ENCODE measurements at regions of chr4 and their contacts with region 1.

Region 1: DNA sequence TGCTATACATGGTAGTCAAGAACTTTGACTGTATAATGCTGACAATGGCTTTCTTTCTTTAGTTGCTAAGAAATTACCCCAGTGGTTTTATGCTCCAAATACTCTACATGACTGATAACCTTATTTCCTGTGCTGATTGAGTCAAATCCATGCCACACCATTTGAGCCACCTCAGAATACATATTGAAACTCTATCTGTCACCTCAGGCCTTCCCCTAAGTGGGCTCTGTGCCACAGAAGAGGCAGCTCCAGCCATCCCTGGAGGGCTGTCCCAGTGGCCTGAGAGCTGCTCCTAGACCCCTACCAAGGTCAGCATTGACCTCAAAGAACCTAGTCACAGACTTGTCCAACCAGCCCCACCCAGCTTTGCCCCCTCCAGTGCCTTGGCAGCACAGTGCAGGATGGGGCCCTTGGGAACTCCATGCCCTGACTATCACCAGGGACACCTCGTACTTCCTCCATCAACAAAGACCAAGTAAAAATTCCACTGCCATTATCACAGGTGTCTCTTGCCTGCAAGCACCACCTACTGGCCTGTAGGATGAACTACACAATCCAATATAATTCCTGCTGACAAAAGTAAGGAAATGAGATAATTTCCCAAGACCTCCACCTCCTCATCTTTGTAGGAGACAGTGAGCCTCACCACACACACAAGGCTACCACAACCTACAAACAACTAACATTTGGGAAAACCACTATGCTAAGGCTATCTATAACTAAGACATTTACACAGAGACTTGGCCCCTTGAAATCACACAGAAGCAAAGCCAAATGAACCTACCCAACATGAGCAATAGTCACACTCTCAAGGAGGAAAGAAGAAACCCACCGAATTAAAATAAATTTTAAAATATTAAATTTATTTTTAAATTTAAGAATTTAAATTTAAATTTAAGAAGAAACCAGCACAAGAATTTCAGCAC is 239.9 kb downstream of the NKX6-1 start:
- DNase-seq: peak; percentile 32
- ATAC-seq: no peak
- H3K4me3 ChIP-seq: no peak overlapping the region
- H3K27ac ChIP-seq: no peak overlapping the region
- H3K4me1 ChIP-seq: peaks cover 10% of the 10 kb centered on the region; the same call in 1 of the 2 replicates
- H3K27me3 ChIP-seq: no peaks in the 10 kb centered on the region
- CTCF ChIP-seq: peak; percentile 67

Region 2: DNA sequence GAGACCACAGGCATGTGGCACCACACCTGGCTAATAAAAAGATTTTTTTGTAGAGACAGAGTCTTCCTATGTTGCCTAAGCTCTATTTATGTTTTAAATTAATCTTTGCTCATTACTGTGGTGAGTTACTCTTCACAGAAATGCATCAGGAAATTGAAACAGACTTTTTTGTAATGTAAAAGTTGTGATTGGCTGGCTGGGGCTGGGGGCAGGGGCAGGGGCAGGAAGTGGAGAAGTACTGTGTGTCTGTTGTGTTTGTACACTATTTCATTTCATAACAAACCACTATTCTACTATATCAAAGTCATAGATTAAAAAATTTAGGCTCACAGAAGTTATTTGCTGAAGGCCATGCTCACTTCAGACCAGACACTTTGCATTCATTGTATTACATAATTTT is 755.2 kb before region 1 on chr4:
- CTCF ChIA-PET with region 1: no interaction called
- POLR2A ChIA-PET with region 1: no interaction called
- intact Hi-C with region 1: no loop called
- DNase-seq: no peak
- ATAC-seq: no peak
- H3K4me3 ChIP-seq: no peak overlapping the region
- H3K27ac ChIP-seq: no peak overlapping the region
- H3K4me1 ChIP-seq: no peaks in the 10 kb centered on the region
- H3K27me3 ChIP-seq: no peaks in the 10 kb centered on the region
- CTCF ChIP-seq: no peak

Region 3: DNA sequence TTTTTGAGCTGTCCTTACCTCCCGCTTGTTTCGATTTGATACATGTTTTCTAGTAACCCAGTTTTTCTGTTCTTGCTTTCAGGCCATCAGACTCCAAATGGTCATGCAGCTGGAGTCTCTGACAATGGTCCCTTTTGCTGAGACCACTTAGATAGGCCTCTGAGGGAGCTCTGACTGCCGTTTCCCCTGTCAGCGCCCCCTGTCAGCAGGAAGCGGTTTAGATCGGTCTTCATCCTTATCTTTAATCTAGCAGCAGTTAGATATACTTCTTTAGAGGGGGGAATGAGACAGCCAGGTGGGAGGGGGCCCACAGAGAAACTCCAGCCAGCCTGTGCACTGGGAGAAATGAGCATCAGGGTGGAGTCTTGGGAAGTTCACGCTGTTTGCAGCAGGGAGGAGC is 265.4 kb before region 1 on chr4:
- CTCF ChIA-PET with region 1: no interaction called
- POLR2A ChIA-PET with region 1: no interaction called
- intact Hi-C with region 1: no loop called
- DNase-seq: no peak
- ATAC-seq: no peak
- H3K4me3 ChIP-seq: no peak overlapping the region
- H3K27ac ChIP-seq: no peak overlapping the region
- H3K4me1 ChIP-seq: no peaks in the 10 kb centered on the region
- H3K27me3 ChIP-seq: no peaks in the 10 kb centered on the region
- CTCF ChIP-seq: peak; percentile 42

Region 4: DNA sequence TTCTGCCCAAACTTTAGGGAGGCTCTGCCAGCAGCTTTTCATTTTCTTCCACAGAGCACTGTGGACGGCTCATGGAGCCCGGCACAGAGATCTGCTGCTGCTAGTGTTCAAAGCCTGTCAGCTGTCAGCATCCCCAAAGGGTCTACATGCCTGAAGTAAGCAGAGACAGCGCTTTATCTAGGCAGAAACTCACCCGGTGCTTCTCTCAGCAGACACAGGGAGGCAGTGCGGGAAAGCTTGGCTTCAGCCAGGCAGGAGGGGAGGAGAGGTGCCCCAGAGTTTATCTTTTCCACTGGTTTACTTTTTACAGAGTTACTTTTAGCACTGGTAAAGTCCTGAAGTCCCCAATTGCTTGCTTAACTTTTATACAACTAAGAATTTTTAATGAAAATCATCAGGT is 99.4 kb before region 1 on chr4:
- CTCF ChIA-PET with region 1: no interaction called
- POLR2A ChIA-PET with region 1: no interaction called
- intact Hi-C with region 1: loop called (anchors 10 kb)
- DNase-seq: peak; percentile 45
- ATAC-seq: no peak
- H3K4me3 ChIP-seq: no peak overlapping the region
- H3K27ac ChIP-seq: no peak overlapping the region
- H3K4me1 ChIP-seq: no peaks in the 10 kb centered on the region
- H3K27me3 ChIP-seq: peaks cover 47% of the 10 kb centered on the region
- CTCF ChIP-seq: peak; percentile 53

Region 5: GRCh38 chr4:84378356-84378755 is 119.2 kb after region 1 on chr4:
- CTCF ChIA-PET with region 1: no interaction called
- POLR2A ChIA-PET with region 1: no interaction called
- intact Hi-C with region 1: no loop called
- DNase-seq: no peak
- ATAC-seq: no peak
- H3K4me3 ChIP-seq: no peak overlapping the region
- H3K27ac ChIP-seq: no peak overlapping the region
- H3K4me1 ChIP-seq: peaks cover 13% of the 10 kb centered on the region; the same call in 1 of the 2 replicates
- H3K27me3 ChIP-seq: no peaks in the 10 kb centered on the region
- CTCF ChIP-seq: no peak